ENCODE measurements at regions of chr9 and their contacts with region 1.

Region 1: GRCh38 chr9:1460143-1460769 is 410.1 kb downstream of the DMRT2 start:
- DNase-seq: no peak
- H3K4me3 Mint-ChIP-seq: no peak overlapping the region
- H3K27ac Mint-ChIP-seq: no peak overlapping the region
- H3K4me1 Mint-ChIP-seq: no peaks in the 10 kb centered on the region
- H3K27me3 Mint-ChIP-seq: peaks cover 5% of the 10 kb centered on the region

Region 2: GRCh38 chr9:1505489-1505888 is 45.2 kb after region 1 on chr9:
- intact Hi-C with region 1: loop called (anchors 2 kb)
- DNase-seq: no peak
- H3K4me3 Mint-ChIP-seq: no peak overlapping the region
- H3K27ac Mint-ChIP-seq: peak overlapping the region; percentile 64
- H3K4me1 Mint-ChIP-seq: no peaks in the 10 kb centered on the region
- H3K27me3 Mint-ChIP-seq: no peaks in the 10 kb centered on the region

Region 3: GRCh38 chr9:1536522-1537170 is 76.4 kb after region 1 on chr9:
- intact Hi-C with region 1: loop called (anchors 2 kb)
- DNase-seq: no peak
- H3K4me3 Mint-ChIP-seq: no peak overlapping the region
- H3K27ac Mint-ChIP-seq: peak overlapping the region; percentile 48
- H3K4me1 Mint-ChIP-seq: peaks cover 18% of the 10 kb centered on the region
- H3K27me3 Mint-ChIP-seq: no peaks in the 10 kb centered on the region

Region 4: DNA sequence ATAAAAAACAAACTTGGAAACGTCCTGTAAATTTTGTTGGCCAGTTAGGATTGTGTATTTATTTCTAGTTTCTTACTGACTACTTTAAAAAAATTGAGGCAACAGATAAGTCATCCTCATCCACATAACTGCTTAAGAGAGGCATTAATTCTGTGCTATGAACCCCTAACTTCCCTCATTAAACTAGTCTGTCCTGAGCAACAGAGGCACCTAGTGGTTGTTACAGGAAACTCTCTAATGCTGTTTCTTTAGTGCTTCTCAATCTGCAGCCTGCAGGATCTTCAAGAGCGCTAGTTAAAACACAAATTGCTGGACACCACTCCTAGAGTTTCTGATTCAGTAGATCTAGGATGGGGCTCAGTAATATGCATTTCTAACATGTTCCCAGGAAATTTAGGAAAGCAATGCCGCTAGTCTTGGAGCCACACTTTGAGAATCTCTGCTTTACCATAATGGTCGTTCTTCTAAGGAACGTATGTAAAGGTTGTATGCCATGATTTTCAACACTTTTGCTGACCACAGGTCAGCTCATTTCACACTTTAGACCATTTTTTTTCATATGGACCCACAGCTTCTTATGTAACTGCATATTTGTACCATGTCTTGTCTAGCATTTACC is 144.8 kb after region 1 on chr9:
- intact Hi-C with region 1: loop called (anchors 1 kb)
- DNase-seq: no peak
- H3K4me3 Mint-ChIP-seq: no peak overlapping the region
- H3K27ac Mint-ChIP-seq: no peak overlapping the region
- H3K4me1 Mint-ChIP-seq: no peaks in the 10 kb centered on the region
- H3K27me3 Mint-ChIP-seq: peaks cover 2% of the 10 kb centered on the region

Measured in activated T-helper 1 cell treated with anti-CD3 and anti-CD28 coated beads, Interleukin-12 subunit alpha, Interleukin-12 subunit beta, Interleukin-2, Interleukin-4 antibody, amounts not matched to agents 30 ng/mL and 10 ng/mL and 1 ng/mL, durations not matched to agents 14 hours and 24 hours and 36 hours (primary cell).